ENCODE measurements at regions of chr12 and their contacts with region 1.

Region 1: DNA sequence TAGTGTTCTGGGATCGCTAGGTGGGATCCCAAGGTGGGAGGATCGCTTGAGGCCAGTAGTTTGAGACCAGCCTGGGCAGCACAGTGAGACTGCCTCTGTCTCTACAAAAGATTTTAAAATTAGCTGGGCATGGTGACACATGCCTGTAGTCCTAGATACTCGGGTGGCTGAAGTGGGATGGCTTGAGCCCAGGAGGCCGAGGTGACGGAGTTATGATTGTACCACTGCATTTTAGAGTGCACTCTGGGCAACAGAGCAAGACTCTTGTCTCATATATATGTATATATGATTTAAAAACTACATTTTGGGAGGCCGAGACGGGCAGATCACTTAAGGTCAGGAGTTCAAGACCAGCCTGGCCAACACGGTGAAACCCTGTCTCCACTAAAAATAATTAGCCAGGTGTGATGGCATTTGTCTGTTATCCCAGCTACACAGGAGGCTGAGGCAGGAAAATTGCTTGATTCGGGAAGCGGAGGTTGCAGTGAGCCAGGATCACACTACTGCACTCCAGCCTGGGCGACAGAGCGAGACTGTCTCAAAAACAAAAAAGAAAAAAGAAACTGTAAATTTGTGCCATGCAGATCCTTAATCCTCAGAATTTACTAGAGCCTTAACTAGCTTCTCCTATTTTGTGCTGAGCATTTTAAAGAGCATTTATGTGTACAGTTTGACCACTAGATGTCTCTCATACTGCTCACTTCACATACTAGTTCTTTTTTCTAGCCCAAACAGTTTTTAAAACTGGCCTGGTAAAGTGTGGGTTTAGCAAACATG is 114.8 kb downstream of the MON2 start:
- DNase-seq: no peak
- H3K4me3 ChIP-seq: no peak overlapping the region
- H3K27me3 ChIP-seq: no peaks in the 10 kb centered on the region
- CTCF ChIP-seq: peak; percentile 66

Region 2: GRCh38 chr12:62458626-62459025 is 122.8 kb before region 1 on chr12:
- CTCF ChIA-PET with region 1: no interaction called
- POLR2A ChIA-PET with region 1: no interaction called
- DNase-seq: no peak
- H3K4me3 ChIP-seq: no peak overlapping the region
- H3K27me3 ChIP-seq: no peaks in the 10 kb centered on the region
- CTCF ChIP-seq: no peak

Region 3: DNA sequence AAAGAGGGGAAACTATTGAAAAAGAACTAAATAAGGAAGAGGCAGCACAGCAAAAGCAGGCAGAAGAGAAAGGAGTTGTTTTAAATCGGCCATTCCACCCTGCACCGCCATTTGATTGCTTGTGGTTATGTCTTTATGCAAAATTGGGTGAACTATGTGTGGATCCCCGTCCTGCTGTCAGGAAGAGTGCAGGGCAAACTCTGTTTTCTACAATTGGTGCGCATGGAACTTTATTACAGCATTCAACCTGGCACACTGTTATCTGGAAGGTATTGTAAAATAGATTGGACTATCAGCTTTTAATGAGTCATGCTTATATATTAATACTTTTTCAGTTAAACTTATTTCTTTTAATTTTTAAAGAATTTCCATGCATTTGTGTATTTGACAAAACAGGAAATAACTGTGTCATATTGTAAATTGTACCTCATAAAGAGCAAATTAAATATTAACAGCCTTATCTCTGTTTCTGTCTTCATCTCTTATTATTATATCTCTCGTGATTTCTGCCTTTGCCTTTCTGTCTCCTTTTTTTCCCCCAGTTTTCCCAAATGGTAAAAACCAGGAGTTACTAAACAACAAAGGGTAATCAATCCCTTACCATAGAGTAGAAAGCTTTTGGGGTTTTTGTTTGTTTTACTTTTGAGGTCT is 28.4 kb before region 1 on chr12:
- CTCF ChIA-PET with region 1: interaction called, 15 read pairs
- POLR2A ChIA-PET with region 1: no interaction called
- DNase-seq: no peak
- H3K4me3 ChIP-seq: no peak overlapping the region
- H3K27me3 ChIP-seq: no peaks in the 10 kb centered on the region
- CTCF ChIP-seq: no peak

Region 4: DNA sequence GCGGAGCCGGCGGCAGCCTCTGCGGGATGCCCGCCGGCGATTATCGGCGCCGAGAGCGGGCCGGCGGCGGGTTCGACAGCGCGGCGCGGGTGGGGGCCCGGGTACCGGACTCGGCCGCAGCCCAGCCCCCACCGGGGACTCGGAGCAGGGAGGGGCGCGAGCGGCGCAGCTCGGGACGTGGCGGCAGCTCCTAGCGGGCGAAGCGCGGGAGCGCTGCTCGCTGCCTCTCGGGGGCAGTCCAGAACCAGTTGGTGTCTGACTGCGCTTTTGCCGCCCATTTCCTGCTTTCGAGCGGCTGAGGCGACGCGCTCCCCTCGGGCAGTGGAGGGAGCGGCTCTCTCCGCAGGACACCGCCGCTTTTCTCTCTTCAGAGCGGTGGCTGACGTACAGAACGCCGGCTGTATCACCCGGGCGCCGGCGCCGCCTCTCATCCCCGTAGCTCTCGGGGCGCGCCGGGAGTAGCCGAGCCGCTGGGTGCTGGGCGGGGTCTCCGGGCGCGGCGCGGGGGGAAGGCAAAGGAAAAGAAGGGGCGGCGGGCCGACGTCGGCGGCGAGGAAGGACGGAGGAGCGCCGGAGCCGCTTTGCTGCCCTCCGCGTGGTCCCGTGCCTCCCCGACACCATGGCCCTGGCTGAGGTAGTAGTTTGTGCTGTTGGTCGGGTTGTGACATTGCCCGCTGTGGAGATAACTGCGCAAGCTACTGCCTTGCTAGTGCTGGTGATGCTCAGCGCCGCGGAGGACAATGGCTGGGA is 21.8 kb after region 1 on chr12:
- CTCF ChIA-PET with region 1: interaction called, 12 read pairs
- POLR2A ChIA-PET with region 1: interaction called, 4 read pairs
- DNase-seq: peak; percentile 47
- H3K4me3 ChIP-seq: peak overlapping the region; percentile 69
- H3K27me3 ChIP-seq: no peaks in the 10 kb centered on the region
- CTCF ChIP-seq: peak; percentile 58